ENCODE measurements at regions of chr10 and their contacts with region 1.

Region 1: GRCh38 chr10:63866075-63866746 is 345.0 kb downstream of the REEP3 start:
- DNase-seq: peak; percentile 52
- ATAC-seq: peak; percentile 93
- H3K4me3 Mint-ChIP-seq: no peak overlapping the region
- H3K27ac Mint-ChIP-seq: no peak overlapping the region
- H3K4me1 Mint-ChIP-seq: peaks cover 8% of the 10 kb centered on the region
- H3K27me3 Mint-ChIP-seq: peaks cover 33% of the 10 kb centered on the region
- CTCF ChIP-seq: peak; percentile 90

Region 2: GRCh38 chr10:63491588-63492316 is 374.5 kb before region 1 on chr10:
- CTCF ChIA-PET with region 1: no interaction called
- POLR2A ChIA-PET with region 1: no interaction called
- intact Hi-C with region 1: no loop called
- DNase-seq: no peak
- ATAC-seq: no peak
- H3K4me3 Mint-ChIP-seq: no peak overlapping the region
- H3K27ac Mint-ChIP-seq: no peak overlapping the region
- H3K4me1 Mint-ChIP-seq: peaks cover 11% of the 10 kb centered on the region
- H3K27me3 Mint-ChIP-seq: no peaks in the 10 kb centered on the region
- CTCF ChIP-seq: no peak

Region 3: GRCh38 chr10:63829020-63829419 is 37.2 kb before region 1 on chr10:
- CTCF ChIA-PET with region 1: interaction called, 10 read pairs
- POLR2A ChIA-PET with region 1: no interaction called
- intact Hi-C with region 1: no loop called
- DNase-seq: no peak
- ATAC-seq: no peak
- H3K4me3 Mint-ChIP-seq: no peak overlapping the region
- H3K27ac Mint-ChIP-seq: no peak overlapping the region
- H3K4me1 Mint-ChIP-seq: no peaks in the 10 kb centered on the region
- H3K27me3 Mint-ChIP-seq: peaks cover 8% of the 10 kb centered on the region
- CTCF ChIP-seq: no peak

Region 4: GRCh38 chr10:63843108-63843507 is 23.1 kb before region 1 on chr10:
- CTCF ChIA-PET with region 1: interaction called, 22 read pairs
- POLR2A ChIA-PET with region 1: no interaction called
- intact Hi-C with region 1: no loop called
- DNase-seq: no peak
- ATAC-seq: no peak
- H3K4me3 Mint-ChIP-seq: no peak overlapping the region
- H3K27ac Mint-ChIP-seq: no peak overlapping the region
- H3K4me1 Mint-ChIP-seq: no peaks in the 10 kb centered on the region
- H3K27me3 Mint-ChIP-seq: peaks cover 9% of the 10 kb centered on the region
- CTCF ChIP-seq: no peak

Region 5: GRCh38 chr10:63878428-63878827 is 12.2 kb after region 1 on chr10:
- CTCF ChIA-PET with region 1: interaction called, 28 read pairs
- POLR2A ChIA-PET with region 1: no interaction called
- intact Hi-C with region 1: no loop called
- DNase-seq: no peak
- ATAC-seq: no peak
- H3K4me3 Mint-ChIP-seq: no peak overlapping the region
- H3K27ac Mint-ChIP-seq: no peak overlapping the region
- H3K4me1 Mint-ChIP-seq: no peaks in the 10 kb centered on the region
- H3K27me3 Mint-ChIP-seq: no peaks in the 10 kb centered on the region
- CTCF ChIP-seq: no peak

Region 6: GRCh38 chr10:63887023-63887589 is 20.9 kb after region 1 on chr10:
- CTCF ChIA-PET with region 1: interaction called, 28 read pairs
- POLR2A ChIA-PET with region 1: no interaction called
- intact Hi-C with region 1: no loop called
- DNase-seq: no peak
- ATAC-seq: no peak
- H3K4me3 Mint-ChIP-seq: no peak overlapping the region
- H3K27ac Mint-ChIP-seq: no peak overlapping the region
- H3K4me1 Mint-ChIP-seq: no peaks in the 10 kb centered on the region
- H3K27me3 Mint-ChIP-seq: peaks cover 2% of the 10 kb centered on the region
- CTCF ChIP-seq: no peak

Region 7: GRCh38 chr10:63901228-63901627 is 35.0 kb after region 1 on chr10:
- CTCF ChIA-PET with region 1: interaction called, 14 read pairs
- POLR2A ChIA-PET with region 1: no interaction called
- intact Hi-C with region 1: no loop called
- DNase-seq: no peak
- ATAC-seq: no peak
- H3K4me3 Mint-ChIP-seq: no peak overlapping the region
- H3K27ac Mint-ChIP-seq: no peak overlapping the region
- H3K4me1 Mint-ChIP-seq: no peaks in the 10 kb centered on the region
- H3K27me3 Mint-ChIP-seq: no peaks in the 10 kb centered on the region
- CTCF ChIP-seq: peak; percentile 48

Region 8: DNA sequence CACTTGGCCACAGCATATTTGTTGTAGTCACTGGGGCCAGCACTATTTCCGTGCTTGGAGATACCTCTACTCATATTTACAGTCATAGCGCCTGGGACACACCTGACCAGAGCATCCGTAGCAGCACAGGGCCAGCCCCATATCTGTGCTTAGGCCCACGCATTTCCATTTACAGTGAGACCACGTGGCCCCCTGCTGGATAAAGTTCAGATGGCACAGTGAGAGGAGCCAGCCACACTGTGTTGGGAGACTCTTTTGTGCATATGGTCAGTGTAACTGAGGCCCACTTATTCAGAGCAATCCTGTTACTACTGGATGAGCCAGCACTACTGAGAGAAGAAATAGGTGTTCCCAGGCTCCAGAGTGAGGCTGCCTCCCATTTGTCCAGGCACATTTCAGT is 110.3 kb after region 1 on chr10:
- CTCF ChIA-PET with region 1: interaction called, 77 read pairs
- POLR2A ChIA-PET with region 1: no interaction called
- intact Hi-C with region 1: loop called (anchors 2 kb)
- DNase-seq: peak; percentile 69
- ATAC-seq: peak; percentile 90
- H3K4me3 Mint-ChIP-seq: no peak overlapping the region
- H3K27ac Mint-ChIP-seq: no peak overlapping the region
- H3K4me1 Mint-ChIP-seq: no peaks in the 10 kb centered on the region
- H3K27me3 Mint-ChIP-seq: no peaks in the 10 kb centered on the region
- CTCF ChIP-seq: peak; percentile 42

Region 9: DNA sequence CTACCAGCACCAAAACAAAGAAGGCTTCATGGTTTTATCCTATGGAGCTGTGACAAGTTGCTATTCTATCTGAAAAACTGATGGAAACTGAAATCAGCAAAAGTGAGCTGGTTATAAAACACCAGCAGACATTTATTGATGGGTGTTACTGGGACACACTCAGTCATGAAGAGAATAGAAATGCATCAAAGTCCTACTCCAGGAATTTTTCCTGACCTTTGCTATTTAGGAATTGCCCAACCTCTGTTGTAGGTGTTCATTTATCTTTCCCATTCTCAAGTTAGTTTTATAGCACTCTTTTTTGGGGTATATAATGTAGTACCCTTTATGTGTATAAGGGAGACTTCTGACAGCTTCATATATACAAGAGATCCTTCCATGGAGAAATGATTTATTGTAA is 188.2 kb after region 1 on chr10:
- CTCF ChIA-PET with region 1: no interaction called
- POLR2A ChIA-PET with region 1: no interaction called
- intact Hi-C with region 1: no loop called
- DNase-seq: no peak
- ATAC-seq: no peak
- H3K4me3 Mint-ChIP-seq: no peak overlapping the region
- H3K27ac Mint-ChIP-seq: no peak overlapping the region
- H3K4me1 Mint-ChIP-seq: no peaks in the 10 kb centered on the region
- H3K27me3 Mint-ChIP-seq: no peaks in the 10 kb centered on the region
- CTCF ChIP-seq: no peak

Measured in activated CD8-positive, alpha-beta T cell treated with anti-CD3 and anti-CD28 coated beads for 36 hours (primary cell).